Esophagus squamous epithelium (tissue), 5 donors: ENCODE measurements at regions of chr12 and their contacts with region 1.

Region 1: GRCh38 chr12:26113853-26114719 is 10.8 kb downstream of the BHLHE41 start:
- DNase-seq: peak; percentile 76
- H3K4me3 ChIP-seq: peak overlapping the region; percentile 38 to 73 (median 54)
- H3K27ac ChIP-seq: peak overlapping the region; percentile 84 to 96 (median 92)
- H3K4me1 ChIP-seq: peaks cover 4 to 24% (median 13%) of the 10 kb centered on the region in 3 donors
- H3K27me3 ChIP-seq: no peaks in the 10 kb centered on the region
- CTCF ChIP-seq: peak in 4 of 6 experiments; percentile 27 to 58 (median 44)
- POLR2A ChIP-seq: peak in 3 of 4 donors; percentile 66 to 90 (median 89)

Region 2: DNA sequence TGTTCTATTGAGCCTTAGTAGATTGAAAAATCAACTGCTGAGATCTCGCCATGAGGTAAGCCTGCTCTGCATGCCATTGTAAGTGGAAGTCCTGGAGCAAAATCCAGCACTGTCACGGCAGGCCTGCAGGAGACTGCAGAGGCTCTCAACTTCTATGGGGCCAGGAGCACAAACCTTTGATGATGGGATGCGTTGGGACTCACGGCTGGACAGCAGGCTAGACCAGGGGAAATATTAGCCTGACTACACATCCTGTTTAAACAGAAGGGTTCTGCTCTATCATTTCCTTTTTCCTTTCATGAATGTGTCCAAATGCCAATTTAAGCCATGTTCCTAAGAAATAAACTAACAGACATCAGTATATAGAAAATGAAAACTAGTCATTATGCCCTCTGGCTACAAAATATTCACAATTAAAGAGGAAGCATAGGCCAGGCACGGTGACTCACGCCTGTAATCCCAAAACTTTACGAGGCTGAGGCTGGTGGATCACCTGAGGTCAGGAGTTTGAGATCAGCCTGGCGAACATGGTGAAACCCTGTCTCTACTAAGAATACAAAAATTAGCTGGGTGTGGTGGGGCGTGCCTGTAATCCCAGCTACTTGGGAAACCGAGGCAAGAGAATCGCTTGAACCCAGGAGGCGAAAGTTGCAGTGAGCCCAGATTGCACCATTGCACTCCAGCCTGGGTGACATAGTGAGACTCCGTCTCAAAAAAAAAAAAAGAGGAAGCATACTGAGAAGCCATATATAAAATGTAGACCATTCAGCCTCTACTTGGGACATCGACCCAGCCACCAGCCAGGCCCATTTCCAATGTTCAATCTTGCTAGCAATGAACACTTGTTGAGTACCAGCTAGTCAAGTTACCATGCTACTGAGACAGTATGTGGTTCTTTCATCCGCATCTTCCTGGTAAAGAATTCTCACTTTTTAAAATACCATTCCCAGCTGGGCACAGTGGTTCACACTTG is 189.3 kb before region 1 on chr12:
- intact Hi-C with region 1: no loop called
- DNase-seq: no peak
- H3K4me3 ChIP-seq: no peak overlapping the region
- H3K27ac ChIP-seq: no peak overlapping the region
- H3K4me1 ChIP-seq: no peaks in the 10 kb centered on the region
- H3K27me3 ChIP-seq: peaks cover 0 to 59% (median 0%) of the 10 kb centered on the region in 4 donors
- CTCF ChIP-seq: no peak
- POLR2A ChIP-seq: no peak

Region 3: DNA sequence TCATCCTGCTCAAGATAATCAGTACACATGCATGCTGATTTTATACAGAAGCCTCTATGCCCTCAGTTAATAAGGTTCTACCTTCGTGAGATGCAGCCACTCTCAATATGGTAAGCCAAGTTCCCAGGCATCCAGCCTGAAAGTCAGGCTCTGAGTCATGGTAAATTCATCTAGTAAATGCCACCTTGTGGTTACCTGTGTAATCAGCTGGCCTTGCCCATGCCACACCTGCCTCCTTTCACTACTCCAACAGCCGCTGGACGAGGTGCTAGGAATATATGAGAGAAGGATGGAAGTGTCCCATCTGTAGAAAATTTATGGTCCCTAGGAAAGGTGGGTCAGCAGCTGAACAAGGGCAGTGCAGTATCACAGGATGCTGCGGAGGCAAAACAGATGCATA is 288.6 kb after region 1 on chr12:
- intact Hi-C with region 1: loop called (anchors 10 kb)
- DNase-seq: no peak
- H3K4me3 ChIP-seq: no peak overlapping the region
- H3K27ac ChIP-seq: no peak overlapping the region
- H3K4me1 ChIP-seq: peaks cover 0 to 12% (median 0%) of the 10 kb centered on the region in 3 donors
- H3K27me3 ChIP-seq: no peaks in the 10 kb centered on the region
- CTCF ChIP-seq: peak in 5 of 6 experiments; percentile 24 to 73 (median 64)
- POLR2A ChIP-seq: no peak